AG04450 (cell line): ENCODE measurements at regions of chr16 and their contacts with region 1.

Region 1: DNA sequence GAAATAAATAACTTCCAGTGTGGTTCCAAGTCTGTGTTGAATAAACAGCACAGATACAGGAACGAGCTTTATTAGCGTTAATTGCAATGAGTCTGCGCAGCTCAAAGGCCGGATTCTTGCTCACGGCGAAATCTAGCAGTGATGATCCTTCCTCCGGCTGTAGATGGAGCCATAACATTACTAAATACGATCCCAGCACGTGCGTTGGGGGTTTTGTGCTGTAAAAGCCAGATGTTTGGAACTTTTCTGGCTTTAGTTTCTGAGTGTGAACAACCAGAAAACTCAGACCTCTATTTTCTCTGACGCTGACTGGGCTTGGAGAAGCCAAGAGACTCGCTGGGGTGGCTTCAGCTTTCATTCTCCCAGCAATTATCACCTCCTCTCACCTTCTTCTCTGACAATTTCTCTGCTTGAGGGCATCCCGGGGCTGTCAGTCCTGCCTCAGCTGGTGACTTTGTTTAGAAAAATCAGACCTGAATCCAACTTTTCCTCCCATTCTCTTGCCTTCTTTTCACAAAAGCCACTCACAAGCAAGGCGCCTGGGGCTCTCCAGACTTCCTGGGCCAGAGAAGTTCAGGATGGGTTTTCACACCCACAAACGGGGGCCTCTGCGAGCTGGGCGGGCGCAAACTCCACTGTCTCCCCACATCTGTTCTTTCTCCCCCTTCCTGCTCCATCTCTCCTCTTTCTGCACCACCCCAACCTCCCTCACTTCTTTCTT is 47.1 kb upstream of the AKTIP start:
- DNase-seq: peak; percentile 70
- H3K4me3 ChIP-seq: no peak overlapping the region
- H3K27ac ChIP-seq: no peak overlapping the region
- H3K27me3 ChIP-seq: peaks cover 31% of the 10 kb centered on the region
- CTCF ChIP-seq: peak; percentile 79

Region 2: DNA sequence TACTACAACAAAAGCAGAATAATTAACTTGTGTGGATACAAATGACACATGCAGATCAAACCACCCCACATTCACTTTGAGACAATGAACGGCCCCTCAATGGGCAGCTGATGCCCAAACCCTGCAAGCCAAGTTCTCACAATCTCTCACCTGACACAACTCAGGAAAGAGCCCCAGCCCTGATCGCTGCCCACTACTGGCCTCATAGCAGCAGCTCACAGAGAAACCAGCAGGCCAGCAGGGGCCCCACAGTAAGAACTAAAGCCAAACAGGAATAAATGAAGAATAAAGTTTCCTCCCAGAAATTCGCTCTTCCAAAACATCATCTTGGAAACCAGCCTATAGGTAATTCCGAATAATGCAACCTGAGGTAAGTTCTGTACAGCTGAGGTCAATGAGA is 54.8 kb before region 1 on chr16:
- CTCF ChIA-PET with region 1: no interaction called
- POLR2A ChIA-PET with region 1: no interaction called
- DNase-seq: no peak
- H3K4me3 ChIP-seq: no peak overlapping the region
- H3K27ac ChIP-seq: no peak overlapping the region
- H3K27me3 ChIP-seq: no peaks in the 10 kb centered on the region
- CTCF ChIP-seq: no peak

Region 3: DNA sequence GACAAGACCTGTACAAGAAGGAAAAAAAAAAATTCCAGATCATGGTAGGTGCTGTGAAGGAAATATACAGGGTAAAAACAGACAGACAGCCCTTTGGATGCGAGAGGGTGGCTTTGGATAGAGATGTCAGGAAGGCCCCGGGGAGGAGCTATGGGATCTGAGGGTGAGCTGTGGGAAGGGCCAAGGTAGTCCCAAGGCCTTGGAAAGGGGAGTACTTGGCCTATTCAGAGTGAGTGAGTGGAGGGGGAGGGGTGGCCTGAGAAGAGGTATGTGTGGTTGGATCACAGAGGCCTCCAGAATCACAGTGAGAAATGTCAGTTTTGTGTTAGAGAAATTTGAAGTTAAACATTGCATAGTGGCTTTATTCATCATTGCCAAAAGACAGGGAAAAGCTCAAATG is 15.9 kb before region 1 on chr16:
- CTCF ChIA-PET with region 1: interaction called, 12 read pairs
- POLR2A ChIA-PET with region 1: no interaction called
- DNase-seq: no peak
- H3K4me3 ChIP-seq: no peak overlapping the region
- H3K27ac ChIP-seq: no peak overlapping the region
- H3K27me3 ChIP-seq: no peaks in the 10 kb centered on the region
- CTCF ChIP-seq: no peak

Region 4: GRCh38 chr16:53566552-53567245 is 16.6 kb after region 1 on chr16:
- CTCF ChIA-PET with region 1: no interaction called
- POLR2A ChIA-PET with region 1: no interaction called
- DNase-seq: no peak
- H3K4me3 ChIP-seq: no peak overlapping the region
- H3K27ac ChIP-seq: no peak overlapping the region
- H3K27me3 ChIP-seq: peaks cover 5% of the 10 kb centered on the region
- CTCF ChIP-seq: no peak

Region 5: DNA sequence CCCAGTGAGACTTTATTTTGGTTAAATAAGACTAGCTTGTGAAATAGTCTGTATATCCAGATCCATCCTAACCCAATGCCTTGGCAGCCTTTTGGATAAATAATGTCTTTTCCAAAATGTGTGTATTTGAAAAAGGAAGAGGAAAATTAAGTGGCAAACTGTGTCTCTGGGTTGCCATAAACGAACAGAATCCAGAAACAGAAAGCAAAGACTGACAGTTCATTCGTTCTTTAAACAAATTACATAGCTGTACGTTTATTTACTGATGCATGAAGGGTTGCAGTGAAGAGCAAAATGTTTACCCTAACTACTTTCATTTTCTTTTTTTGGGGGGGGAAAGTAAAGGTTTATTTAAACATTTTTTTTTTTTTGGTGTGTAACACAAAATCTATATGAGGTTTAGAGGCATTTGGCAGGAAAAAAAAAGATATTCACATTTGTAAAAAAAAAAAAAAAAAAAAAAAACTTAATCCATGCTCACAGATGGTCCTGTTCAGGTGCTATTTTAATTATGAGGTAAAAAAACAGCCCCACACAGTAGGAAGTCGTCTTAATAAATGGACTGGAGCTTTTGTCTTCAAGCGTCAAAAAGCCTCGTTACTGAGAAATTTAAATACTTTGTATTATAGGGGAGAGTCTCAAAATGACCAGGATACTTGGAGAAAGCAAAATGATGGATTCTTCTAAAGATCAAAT is 399.7 kb after region 1 on chr16:
- CTCF ChIA-PET with region 1: interaction called, 18 read pairs
- POLR2A ChIA-PET with region 1: no interaction called
- DNase-seq: no peak
- H3K4me3 ChIP-seq: no peak overlapping the region
- H3K27ac ChIP-seq: no peak overlapping the region
- H3K27me3 ChIP-seq: no peaks in the 10 kb centered on the region
- CTCF ChIP-seq: no peak

Region 6: DNA sequence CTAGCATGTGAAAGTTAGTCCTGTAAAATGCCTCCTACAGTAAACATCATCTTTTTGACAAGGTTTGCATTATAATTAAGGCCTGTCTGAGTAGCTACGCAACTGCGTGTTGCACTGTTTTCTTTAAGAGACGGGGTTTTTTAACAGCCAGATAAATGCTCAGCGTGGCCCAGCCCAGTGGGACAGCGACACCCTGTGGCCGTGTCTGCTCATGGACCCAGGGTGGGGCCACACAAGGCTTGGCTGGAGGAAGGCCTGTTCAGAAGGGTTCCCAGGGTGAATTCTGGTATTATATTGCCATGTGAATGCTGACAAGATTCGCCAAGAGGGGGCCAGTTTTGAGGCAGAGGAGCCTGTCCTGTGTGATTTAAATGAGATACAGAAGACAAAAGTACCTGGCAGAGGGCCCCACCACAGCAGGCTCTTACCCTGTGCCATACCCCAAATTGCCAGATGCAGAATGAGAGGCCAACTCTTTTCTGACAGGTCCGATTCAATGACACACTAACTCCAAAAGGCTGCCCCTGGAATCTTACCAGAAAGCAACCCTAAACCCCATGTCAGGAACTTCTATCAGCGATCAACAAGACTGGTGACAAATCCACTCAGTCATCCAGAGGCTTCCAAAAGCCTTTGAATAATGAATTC is 1708.0 kb after region 1 on chr16:
- CTCF ChIA-PET with region 1: interaction called, 15 read pairs
- POLR2A ChIA-PET with region 1: no interaction called
- DNase-seq: no peak
- H3K4me3 ChIP-seq: no peak overlapping the region
- H3K27ac ChIP-seq: no peak overlapping the region
- H3K27me3 ChIP-seq: no peaks in the 10 kb centered on the region
- CTCF ChIP-seq: peak; percentile 63